Ascending aorta (tissue), 2 donors: ENCODE measurements at regions of chr2 and their contacts with region 1.

Region 1: GRCh38 chr2:26846328-26847306 is 1.3 kb upstream of the DPYSL5 start:
- DNase-seq: peak in 1 of 2 donors; percentile 72
- H3K4me3 ChIP-seq: no peak overlapping the region
- H3K27ac ChIP-seq: no peak overlapping the region
- H3K4me1 ChIP-seq: peaks cover 14 to 23% of the 10 kb centered on the region in 2 donors
- H3K27me3 ChIP-seq: peaks cover 29% of the 10 kb centered on the region
- CTCF ChIP-seq: peak; percentile 53 to 83 (median 76)

Region 2: DNA sequence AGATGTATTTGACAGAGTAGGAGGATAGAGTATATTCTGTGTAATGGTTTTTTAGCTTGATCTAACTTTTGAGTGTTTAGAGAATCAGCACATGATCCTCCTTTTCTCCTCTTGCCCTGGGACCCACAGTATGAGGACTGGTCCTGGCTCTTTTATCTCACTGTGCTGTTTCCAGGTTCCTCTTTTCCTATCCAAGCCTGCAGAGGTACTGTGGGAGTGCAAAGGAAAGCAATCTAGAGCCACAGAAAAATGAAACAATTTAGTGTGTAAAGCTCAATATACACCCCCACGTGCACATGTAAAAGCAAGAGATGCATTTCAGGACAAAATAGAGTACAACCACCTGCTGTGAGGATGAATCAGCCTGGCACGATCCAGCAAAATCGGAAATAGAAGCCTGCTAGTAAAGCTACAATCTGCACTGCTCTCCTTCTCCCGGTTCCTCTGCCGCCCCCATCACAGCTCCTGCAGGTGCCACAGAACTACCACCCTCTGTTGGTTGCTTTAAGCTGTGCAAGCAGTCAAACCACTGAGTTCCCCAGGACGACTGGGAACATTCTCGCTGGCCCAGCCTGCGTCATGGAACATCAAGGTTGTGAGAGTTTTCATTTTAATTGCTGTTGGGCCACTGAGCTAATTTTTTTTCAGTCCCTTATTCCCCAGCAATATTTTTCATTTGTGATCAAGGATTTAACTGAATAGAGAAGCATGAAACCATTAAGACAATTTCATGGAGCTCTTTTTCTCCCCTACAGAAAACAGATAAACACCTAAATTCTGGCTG is 76.0 kb after region 1 on chr2:
- intact Hi-C with region 1: loop called (anchors 5 kb)
- DNase-seq: no peak
- H3K4me3 ChIP-seq: no peak overlapping the region
- H3K27ac ChIP-seq: no peak overlapping the region
- H3K4me1 ChIP-seq: no peaks in the 10 kb centered on the region
- H3K27me3 ChIP-seq: no peaks in the 10 kb centered on the region
- CTCF ChIP-seq: peak in 2 of 3 experiments; percentile 33 to 41

Region 3: DNA sequence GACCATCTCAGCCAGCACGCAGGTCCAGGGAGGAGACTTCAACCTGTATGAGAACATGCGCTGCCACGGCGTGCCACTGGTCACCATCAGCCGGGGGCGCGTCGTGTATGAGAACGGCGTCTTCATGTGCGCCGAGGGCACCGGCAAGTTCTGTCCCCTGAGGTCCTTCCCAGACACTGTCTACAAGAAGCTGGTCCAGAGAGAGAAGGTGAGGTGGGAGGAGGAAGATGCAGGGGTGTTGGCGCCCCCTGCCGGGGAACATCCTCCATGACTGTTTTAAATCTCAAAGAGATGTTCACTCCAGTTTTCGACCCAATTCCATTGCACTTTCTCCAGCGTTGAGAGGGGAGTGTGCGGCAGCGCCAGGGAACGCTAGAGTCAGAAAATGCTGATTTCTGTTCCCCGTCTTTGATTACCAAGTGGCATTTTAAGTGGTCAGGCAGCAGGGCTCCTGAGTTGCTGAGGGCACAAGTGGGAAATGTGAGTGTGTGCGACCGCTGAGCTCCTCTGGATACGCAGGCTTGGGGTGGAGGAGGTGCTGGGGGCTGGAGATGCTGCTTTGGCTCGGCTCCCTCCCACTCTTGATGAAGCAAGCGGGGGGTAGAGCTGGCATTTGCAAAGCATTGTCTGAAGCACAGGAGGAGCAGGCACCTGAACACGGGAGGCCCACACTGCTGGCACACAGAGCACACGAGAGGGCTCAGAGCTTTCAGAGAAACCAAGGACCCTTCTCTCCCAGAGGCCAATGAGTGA is 96.1 kb after region 1 on chr2:
- intact Hi-C with region 1: loop called (anchors 2 kb)
- DNase-seq: peak in 1 of 2 donors; percentile 68
- H3K4me3 ChIP-seq: no peak overlapping the region
- H3K27ac ChIP-seq: no peak overlapping the region
- H3K4me1 ChIP-seq: no peaks in the 10 kb centered on the region
- H3K27me3 ChIP-seq: no peaks in the 10 kb centered on the region
- CTCF ChIP-seq: peak; percentile 52 to 65 (median 59)

Region 4: GRCh38 chr2:27016801-27017325 is 170.2 kb after region 1 on chr2:
- intact Hi-C with region 1: loop called (anchors 10 kb)
- DNase-seq: peak in 1 of 2 donors; percentile 65
- H3K4me3 ChIP-seq: no peak overlapping the region
- H3K27ac ChIP-seq: no peak overlapping the region
- H3K4me1 ChIP-seq: peaks cover 0 to 2% of the 10 kb centered on the region in 2 donors
- H3K27me3 ChIP-seq: no peaks in the 10 kb centered on the region
- CTCF ChIP-seq: peak; percentile 36 to 66 (median 45)

Region 5: GRCh38 chr2:27281855-27282559 is 435.4 kb after region 1 on chr2 and contains the start of gene TRIM54:
- intact Hi-C with region 1: loop called (anchors 10 kb)
- DNase-seq: no peak
- H3K4me3 ChIP-seq: no peak within 1 kb of the TSS
- H3K27ac ChIP-seq: no peak within 1 kb of the TSS
- H3K4me1 ChIP-seq: no peaks in the 10 kb centered on the region
- H3K27me3 ChIP-seq: no peaks in the 10 kb centered on the region
- CTCF ChIP-seq: no peak
- total RNA-seq, gene TRIM54: not detected